Motor neuron (in vitro differentiated cells): ENCODE measurements at regions of chr17 and their contacts with region 1.

Region 1: DNA sequence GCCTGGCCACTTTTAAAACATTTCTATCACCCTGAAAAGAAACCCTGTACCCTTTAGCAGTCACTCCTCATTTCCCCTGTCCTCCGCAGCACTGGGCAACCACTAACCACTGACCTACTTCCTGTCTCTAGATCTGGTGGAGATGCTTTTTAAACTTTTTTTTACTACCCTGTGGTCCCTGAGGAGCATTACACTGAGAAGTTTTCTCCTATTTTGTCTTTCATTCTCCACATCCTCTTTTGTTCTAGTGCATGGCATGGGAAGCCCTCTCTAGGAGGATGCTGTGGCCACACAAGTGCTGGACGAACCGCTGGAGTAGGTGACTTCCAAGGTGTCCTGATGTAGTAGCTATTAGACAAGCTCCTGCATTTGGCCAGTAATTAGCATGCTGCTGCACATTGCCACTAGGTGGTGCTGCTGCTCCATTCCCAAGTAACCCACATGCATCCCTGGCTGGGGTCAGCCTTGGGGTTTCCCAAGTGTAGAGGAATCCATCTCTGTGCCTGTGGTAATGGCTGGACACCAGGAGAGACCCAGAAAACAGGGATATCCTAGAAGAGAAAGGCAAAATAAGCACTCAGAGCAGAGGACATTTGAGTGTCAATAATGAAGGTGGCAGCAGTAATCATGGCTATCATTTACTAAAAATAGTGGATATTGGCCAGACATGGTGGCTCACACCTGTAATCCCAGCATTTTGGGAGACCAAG is 143.8 kb upstream of the CRHR1 start:
- ATAC-seq: peak; percentile 72 to 96 (median 86)
- H3K4me3 ChIP-seq: no peak overlapping the region
- H3K27ac ChIP-seq: no peak overlapping the region
- H3K4me1 ChIP-seq: no peaks in the 10 kb centered on the region

Region 2: GRCh38 chr17:45385331-45385997 is 254.8 kb before region 1 on chr17:
- in situ Hi-C with region 1: no loop called
- ATAC-seq: peak; percentile 77 to 99 (median 94)
- H3K4me3 ChIP-seq: no peak overlapping the region
- H3K27ac ChIP-seq: no peak overlapping the region
- H3K4me1 ChIP-seq: no peaks in the 10 kb centered on the region

Region 3: GRCh38 chr17:45828628-45829027 is 188.3 kb after region 1 on chr17:
- in situ Hi-C with region 1: loop called in 6 of 9 experiments (anchors 5 to 25 kb)
- ATAC-seq: peak in 2 of 8 experiments; percentile 71 to 88
- H3K4me3 ChIP-seq: no peak overlapping the region
- H3K27ac ChIP-seq: no peak overlapping the region
- H3K4me1 ChIP-seq: no peaks in the 10 kb centered on the region

Region 4: GRCh38 chr17:45834471-45835396 is 194.4 kb after region 1 on chr17:
- in situ Hi-C with region 1: loop called in 6 of 9 experiments (anchors 5 to 25 kb)
- ATAC-seq: peak in 5 of 8 experiments; percentile 9 to 45 (median 10)
- H3K4me3 ChIP-seq: no peak overlapping the region
- H3K27ac ChIP-seq: no peak overlapping the region
- H3K4me1 ChIP-seq: peaks cover 0 to 5% of the 10 kb centered on the region in 2 donors

Region 5: GRCh38 chr17:45841883-45842525 is 201.7 kb after region 1 on chr17:
- in situ Hi-C with region 1: loop called in 4 of 9 experiments (anchors 10 to 25 kb)
- ATAC-seq: peak in 5 of 8 experiments; percentile 9 to 61 (median 35)
- H3K4me3 ChIP-seq: no peak overlapping the region
- H3K27ac ChIP-seq: no peak overlapping the region
- H3K4me1 ChIP-seq: no peaks in the 10 kb centered on the region

Region 6: DNA sequence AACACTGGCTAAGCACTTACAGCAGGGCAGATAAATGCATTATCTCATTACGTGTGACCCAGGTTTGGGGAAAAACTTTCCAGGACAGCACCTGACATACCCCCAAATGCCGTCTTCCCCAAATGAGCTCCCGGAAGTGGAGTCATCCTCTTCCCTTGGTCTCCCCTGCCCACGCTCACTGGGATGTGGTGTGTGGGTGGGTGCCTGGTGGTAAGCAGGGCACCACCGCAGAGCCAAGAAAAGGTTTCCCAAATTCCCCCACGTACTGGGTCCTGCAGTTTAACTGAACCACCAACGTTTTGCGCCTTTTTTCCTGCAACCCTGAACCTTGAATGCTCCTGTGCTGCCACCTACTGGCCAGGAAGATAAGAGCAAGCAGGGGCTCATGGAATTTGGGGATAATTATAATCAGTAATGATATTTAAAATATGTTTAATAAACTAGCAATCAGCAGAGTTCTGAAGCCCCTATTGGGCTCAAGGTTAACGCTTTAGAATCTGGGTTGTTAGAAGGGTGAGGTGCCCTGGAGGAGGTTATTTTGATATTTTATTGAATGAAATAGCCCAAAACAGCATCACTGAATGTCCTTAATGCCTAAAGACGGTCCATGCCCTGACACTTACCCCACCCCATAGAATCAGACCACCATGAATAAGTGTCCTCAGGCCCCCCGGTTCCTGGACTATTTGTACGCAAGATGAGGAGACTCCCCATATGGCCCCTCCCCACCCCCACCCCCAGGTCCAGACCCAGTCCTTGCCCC is 212.4 kb after region 1 on chr17:
- in situ Hi-C with region 1: loop called in 4 of 9 experiments (anchors 25 kb)
- ATAC-seq: peak in 3 of 8 experiments; percentile 32 to 59 (median 41)
- H3K4me3 ChIP-seq: no peak overlapping the region
- H3K27ac ChIP-seq: no peak overlapping the region
- H3K4me1 ChIP-seq: no peaks in the 10 kb centered on the region